Activated CD4-positive, alpha-beta memory T cell treated with anti-CD3 and anti-CD28 coated beads for 36 hours (primary cell): ENCODE measurements at regions of chr13 and their contacts with region 1.

Region 1: GRCh38 chr13:99314640-99315176 is 7.5 kb upstream of the GPR183 start:
- DNase-seq: peak; percentile 87
- H3K4me3 Mint-ChIP-seq: peak overlapping the region; percentile 64
- H3K27ac Mint-ChIP-seq: peak overlapping the region; percentile 93
- H3K4me1 Mint-ChIP-seq: peaks cover 82% of the 10 kb centered on the region
- H3K27me3 Mint-ChIP-seq: no peaks in the 10 kb centered on the region

Region 2: DNA sequence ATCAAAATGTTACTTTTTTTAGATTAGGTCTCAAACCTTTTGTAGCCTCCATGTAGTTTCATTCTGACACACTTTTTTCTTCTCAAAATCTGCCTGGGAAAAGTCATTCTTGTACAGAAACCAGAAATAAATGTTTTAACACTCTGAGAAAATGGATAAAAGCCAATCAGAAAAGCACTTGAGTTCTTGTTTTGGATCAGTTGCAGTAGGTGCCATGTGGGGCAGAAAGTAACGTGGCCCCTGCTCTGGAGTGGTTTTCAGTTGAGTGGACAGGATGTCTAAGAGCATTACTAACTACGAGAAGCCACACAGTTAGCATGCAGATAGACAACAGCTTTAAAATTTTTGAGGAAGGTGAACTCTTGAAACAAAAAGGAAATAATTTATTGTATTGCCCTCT is 26.6 kb before region 1 on chr13:
- CTCF ChIA-PET with region 1: interaction called, 3 read pairs
- POLR2A ChIA-PET with region 1: no interaction called
- intact Hi-C with region 1: loop called (anchors 2 kb)
- DNase-seq: peak; percentile 87
- H3K4me3 Mint-ChIP-seq: no peak overlapping the region
- H3K27ac Mint-ChIP-seq: peak overlapping the region; percentile 80
- H3K4me1 Mint-ChIP-seq: peaks cover 85% of the 10 kb centered on the region
- H3K27me3 Mint-ChIP-seq: no peaks in the 10 kb centered on the region

Region 3: GRCh38 chr13:99296398-99296797 is 18.3 kb before region 1 on chr13:
- CTCF ChIA-PET with region 1: interaction called, 3 read pairs
- POLR2A ChIA-PET with region 1: interaction called, 72 read pairs
- intact Hi-C with region 1: no loop called
- DNase-seq: no peak
- H3K4me3 Mint-ChIP-seq: peak overlapping the region; percentile 47
- H3K27ac Mint-ChIP-seq: peak overlapping the region; percentile 88
- H3K4me1 Mint-ChIP-seq: peaks cover 80% of the 10 kb centered on the region
- H3K27me3 Mint-ChIP-seq: no peaks in the 10 kb centered on the region

Region 4: DNA sequence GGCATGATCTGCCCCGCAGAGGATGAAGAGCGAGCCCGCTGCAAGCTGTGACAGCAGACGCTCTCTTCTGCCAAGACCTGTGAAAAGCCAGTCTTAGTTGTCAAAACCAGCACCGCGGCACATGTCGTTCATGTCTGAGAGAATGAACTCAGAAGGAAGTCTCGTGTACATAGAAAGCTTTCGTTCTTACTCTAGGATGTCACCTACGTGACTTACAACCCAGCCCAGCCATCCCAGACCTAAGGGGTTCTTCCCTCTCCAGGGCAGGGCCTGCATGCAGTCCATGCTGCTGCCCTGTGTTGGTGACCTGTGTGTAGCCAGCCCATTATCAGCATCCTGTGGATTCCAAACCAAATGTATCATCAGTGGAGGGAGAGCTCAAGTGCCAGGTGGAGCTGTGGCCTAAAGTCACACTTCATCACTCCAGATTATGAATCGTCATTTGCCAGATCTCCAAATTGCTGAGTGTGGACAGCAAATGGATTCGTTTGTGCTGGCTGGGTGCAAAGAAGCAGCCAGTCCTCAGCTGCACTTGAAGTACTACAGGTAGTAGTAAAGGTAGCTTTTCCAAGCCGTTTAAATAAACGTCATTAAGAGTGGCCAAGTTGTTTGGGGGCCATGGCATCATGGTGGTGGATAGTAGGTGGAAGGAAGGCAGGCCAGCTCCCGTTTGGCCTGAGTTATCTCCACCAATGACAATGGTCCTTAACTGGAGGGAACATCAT is 66.4 kb after region 1 on chr13:
- CTCF ChIA-PET with region 1: no interaction called
- POLR2A ChIA-PET with region 1: interaction called, 5 read pairs
- intact Hi-C with region 1: loop called (anchors 2 kb)
- DNase-seq: peak; percentile 87
- H3K4me3 Mint-ChIP-seq: peak overlapping the region; percentile 36
- H3K27ac Mint-ChIP-seq: peak overlapping the region; percentile 89
- H3K4me1 Mint-ChIP-seq: peaks cover 84% of the 10 kb centered on the region
- H3K27me3 Mint-ChIP-seq: no peaks in the 10 kb centered on the region

Region 5: DNA sequence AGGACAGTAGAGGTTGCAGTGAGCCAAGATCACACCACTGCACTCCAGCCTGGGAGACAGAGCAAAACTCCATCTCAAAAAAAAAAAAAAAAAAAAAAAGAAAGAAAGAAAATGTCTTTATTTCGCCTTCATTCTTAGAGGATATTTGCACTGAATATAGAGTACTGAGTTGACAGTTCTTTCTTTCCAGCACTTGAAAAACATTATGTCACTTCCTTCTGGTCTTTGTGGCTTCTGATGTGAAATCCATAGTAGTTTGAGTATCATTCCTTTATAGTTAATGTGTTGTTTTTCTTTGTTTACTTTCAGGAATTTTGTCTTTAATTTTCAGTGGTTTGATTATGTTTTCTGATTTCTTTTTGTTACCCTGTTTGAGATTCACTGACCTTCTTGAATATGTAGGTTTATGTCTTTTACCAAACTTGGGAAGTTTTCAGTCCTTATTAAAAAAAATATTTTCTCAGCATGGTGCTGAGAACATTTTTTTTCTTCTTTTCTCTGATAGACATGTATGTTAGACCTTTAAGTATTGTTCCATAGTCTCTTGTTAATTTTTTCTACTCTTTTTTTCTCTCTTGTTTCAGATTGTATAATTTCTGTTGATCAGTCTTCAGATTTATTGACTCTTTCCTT is 824.3 kb after region 1 on chr13:
- CTCF ChIA-PET with region 1: no interaction called
- POLR2A ChIA-PET with region 1: no interaction called
- intact Hi-C with region 1: no loop called
- DNase-seq: no peak
- H3K4me3 Mint-ChIP-seq: no peak overlapping the region
- H3K27ac Mint-ChIP-seq: no peak overlapping the region
- H3K4me1 Mint-ChIP-seq: peaks cover 6% of the 10 kb centered on the region
- H3K27me3 Mint-ChIP-seq: no peaks in the 10 kb centered on the region